ENCODE measurements at regions of chr18 and their contacts with region 1.

Region 1: GRCh38 chr18:47204908-47205522 is 28.9 kb upstream of the IER3IP1 start:
- DNase-seq: no peak
- ATAC-seq: no peak
- H3K4me3 ChIP-seq: no peak overlapping the region
- H3K27ac ChIP-seq: no peak overlapping the region
- H3K4me1 ChIP-seq: no peaks in the 10 kb centered on the region
- H3K27me3 ChIP-seq: no peaks in the 10 kb centered on the region

Region 2: GRCh38 chr18:47050468-47050867 is 154.5 kb before region 1 on chr18:
- intact Hi-C with region 1: loop called in 1 of 2 experiments (anchors 5 kb)
- DNase-seq: no peak
- ATAC-seq: no peak
- H3K4me3 ChIP-seq: no peak overlapping the region
- H3K27ac ChIP-seq: no peak overlapping the region
- H3K4me1 ChIP-seq: no peaks in the 10 kb centered on the region
- H3K27me3 ChIP-seq: no peaks in the 10 kb centered on the region

Region 3: GRCh38 chr18:47100214-47100831 is 104.7 kb before region 1 on chr18:
- intact Hi-C with region 1: loop called in 1 of 2 experiments (anchors 2 kb)
- DNase-seq: no peak
- ATAC-seq: no peak
- H3K4me3 ChIP-seq: no peak overlapping the region
- H3K27ac ChIP-seq: no peak overlapping the region
- H3K4me1 ChIP-seq: no peaks in the 10 kb centered on the region
- H3K27me3 ChIP-seq: no peaks in the 10 kb centered on the region

Measured in aorta (tissue), 5 donors.